AG04449 (cell line): ENCODE measurements at regions of chr10 and their contacts with region 1.

Region 1: DNA sequence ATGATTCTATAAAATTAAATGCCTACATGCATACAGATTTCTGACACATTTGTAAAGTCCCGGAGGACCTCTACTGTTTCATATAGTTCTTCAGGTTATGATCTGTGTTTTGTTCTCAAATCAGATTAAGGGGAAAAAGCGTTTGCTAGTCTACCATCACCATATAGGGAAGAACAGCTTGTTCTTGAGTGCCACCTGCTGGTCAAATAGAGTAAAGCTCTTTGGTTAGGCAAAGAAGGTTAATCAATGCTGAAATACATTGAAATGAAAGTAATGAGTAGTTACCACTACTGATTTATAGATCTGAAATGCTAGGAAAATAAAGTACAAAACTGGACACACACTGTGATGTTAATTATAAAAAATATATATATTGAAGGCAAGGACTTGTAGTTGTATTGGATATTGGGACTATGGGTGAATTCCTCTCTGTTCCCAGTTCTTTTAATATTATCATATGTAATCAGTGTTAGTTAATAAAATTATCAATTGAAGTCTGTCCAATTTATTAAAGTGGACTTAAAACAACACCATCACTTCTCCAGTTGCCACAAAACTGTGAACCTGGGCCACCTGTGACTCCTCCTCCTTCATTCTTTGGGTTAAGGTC is 72.6 kb upstream of the PDLIM1 start:
- DNase-seq: no peak
- H3K4me3 ChIP-seq: no peak overlapping the region
- CTCF ChIP-seq: peak; percentile 69

Region 2: DNA sequence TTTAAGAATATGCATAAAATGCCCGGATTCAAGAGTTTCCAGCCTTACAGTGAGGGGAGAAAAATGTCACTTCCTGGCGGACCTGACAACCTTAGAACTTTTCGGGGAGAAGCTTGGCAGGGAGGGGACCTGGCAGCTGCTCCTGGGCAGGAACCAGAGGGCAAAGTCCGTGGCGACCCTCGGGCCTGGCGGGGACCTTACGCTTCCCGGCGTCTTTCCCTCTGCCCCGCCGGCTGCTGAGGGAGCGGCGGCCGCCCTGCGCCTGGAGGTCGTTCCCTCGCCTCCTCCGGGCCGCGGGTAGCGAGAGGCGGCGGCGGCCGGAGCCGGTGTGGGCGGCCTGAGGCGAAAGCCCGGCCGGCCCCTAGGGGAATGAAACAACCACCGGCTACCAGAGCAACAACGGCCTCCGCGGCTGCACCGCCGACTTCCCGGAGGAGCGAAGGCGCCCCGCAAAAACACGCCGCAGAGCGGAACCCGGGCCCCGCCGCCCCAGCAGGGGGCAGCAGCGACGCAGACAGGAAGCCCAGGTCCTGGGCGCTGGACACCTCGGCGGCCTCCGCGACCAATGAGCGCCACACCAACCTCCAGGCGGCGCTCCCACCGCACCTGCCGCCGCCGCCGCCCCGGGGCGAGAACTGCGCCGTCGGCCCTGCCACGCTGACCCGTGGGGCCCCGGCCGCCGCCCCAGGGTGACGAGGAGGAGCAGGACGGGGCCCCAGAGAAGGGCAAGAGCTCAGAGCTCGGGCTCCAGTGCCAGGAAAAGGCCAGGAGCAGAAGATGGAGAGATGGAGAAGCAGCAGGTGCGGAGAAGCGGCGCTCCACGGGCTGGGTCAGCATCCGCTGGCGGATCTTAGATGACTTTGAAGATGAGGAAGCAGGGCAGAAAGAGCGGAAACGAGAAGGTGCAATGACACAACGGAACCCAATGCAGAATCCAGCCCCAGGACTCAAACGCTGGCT is 179.9 kb before region 1 on chr10:
- CTCF ChIA-PET with region 1: interaction called, 95 read pairs
- POLR2A ChIA-PET with region 1: no interaction called
- DNase-seq: no peak
- H3K4me3 ChIP-seq: peak overlapping the region; percentile 63
- CTCF ChIP-seq: peak; percentile 99

Region 3: DNA sequence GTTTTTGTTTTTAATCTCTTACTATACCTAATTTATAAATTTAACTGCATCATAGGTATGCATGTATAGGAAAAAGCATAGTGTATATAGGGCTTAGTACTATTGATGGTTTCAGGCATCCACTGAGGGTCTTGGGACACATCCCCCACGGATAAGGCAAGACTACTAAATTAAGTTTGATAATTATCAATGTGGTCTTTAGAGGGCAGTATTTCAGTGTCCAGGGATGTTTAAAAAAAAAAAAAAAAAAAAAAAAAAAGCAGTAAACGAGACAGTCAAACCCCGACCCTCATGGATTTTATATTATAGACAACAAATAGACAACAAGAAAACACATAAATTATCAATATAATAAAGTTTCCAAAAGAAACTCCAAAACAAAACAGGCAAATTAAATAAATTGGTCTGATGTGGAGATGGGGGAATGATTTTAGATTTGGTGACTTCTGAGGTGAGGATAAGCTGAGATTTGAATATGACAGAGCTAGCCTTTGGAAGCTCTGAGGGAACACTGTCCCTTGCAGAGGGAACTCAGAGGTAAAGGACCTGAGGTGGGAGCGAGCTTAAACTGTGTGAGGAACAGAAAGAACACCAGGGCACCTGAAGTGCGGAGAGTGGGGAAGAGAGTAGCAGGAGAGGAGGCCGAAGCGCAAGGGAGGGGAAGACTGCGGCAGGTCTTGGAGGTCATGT is 154.6 kb before region 1 on chr10:
- CTCF ChIA-PET with region 1: interaction called, 75 read pairs
- POLR2A ChIA-PET with region 1: no interaction called
- DNase-seq: no peak
- H3K4me3 ChIP-seq: no peak overlapping the region
- CTCF ChIP-seq: peak; percentile 12

Region 4: DNA sequence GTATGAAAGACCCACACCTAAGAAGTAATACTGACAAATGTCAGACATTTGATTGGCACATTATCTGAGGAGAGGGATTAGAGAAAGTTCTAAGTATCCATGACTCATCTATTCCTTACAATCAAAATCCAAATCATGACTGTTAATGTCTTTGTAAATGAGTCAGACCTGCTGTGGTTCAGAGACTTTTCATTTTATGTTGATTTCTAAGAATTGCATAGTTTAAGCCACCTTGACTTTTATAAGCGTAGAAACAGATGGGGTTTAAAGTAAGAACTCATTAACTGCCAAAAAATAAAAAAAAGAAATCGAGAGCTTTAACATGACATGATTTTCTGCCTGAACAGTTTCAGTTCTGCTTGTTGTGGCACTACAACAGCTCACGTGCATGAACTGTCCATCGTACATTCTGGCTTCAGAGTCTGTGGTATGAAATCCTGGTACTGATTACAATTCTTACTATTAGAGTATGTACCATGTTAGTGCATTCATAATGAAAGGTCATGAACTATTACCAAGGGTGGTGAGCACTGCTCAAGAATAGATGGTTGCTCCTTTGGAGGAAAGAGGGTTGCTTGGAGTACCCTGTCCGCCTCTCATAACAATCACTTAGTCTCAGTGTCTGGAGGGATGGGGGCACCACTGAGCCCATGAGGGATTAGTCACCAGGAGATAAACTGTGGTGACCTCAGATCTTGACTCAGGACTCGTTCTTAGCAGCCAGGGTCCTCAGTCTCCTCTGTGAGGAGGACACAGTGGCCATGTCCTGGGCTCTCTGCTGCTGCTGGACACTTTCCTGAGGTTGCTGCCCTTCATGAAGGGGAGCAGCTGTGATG is 127.1 kb before region 1 on chr10:
- CTCF ChIA-PET with region 1: interaction called, 601 read pairs
- POLR2A ChIA-PET with region 1: no interaction called
- DNase-seq: no peak
- H3K4me3 ChIP-seq: no peak overlapping the region
- CTCF ChIP-seq: no peak

Region 5: DNA sequence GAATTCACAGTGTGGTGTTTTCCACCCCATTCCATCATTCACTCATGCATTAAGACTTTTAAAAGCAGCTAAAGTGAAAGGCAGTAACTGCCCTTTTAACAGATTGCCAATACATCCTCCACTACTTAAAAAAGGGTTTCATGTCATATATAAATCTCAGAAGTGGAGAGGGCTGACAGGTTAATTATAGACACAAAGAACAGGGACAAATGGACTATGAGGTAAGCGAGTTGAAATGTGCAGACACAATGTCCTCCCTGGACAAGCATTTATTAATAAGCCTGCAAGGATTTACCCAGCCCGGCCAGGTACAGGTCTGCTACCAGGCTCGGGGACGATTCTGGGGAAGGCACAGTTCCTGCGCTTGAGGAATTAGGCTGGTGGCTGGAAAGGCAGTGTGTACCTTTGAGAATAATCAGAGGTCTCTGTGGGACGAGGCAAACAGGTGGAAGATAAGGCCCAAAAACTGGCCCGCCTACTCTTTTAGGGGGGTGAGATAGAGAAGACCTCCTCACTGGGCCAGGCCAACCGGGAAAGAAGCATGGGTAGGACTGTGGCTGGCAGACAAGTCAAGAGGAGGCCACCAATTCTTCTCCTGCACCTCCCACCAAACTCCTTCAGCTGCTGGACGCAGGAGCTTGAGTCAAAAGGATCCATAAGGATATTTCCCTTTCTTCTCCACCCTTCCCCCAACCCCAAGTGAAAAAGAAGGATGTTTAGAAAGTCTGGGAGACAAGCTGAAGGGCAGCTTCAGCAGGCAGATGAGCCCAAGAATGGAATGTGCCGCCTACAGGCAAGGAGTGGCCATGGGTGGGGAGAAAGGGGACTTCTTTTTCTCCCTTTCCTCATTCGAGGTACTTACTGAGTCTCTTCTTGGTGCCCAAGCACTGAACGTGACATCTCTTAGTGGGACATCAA is 74.1 kb before region 1 on chr10:
- CTCF ChIA-PET with region 1: interaction called, 12 read pairs
- POLR2A ChIA-PET with region 1: no interaction called
- DNase-seq: no peak
- H3K4me3 ChIP-seq: peak overlapping the region; percentile 89
- CTCF ChIP-seq: no peak

Region 6: GRCh38 chr10:95350219-95350829 is 13.1 kb before region 1 on chr10:
- CTCF ChIA-PET with region 1: interaction called, 118 read pairs
- POLR2A ChIA-PET with region 1: no interaction called
- DNase-seq: no peak
- H3K4me3 ChIP-seq: no peak overlapping the region
- CTCF ChIP-seq: no peak